Activated naive CD4-positive, alpha-beta T cell treated with anti-CD3 and anti-CD28 coated beads for 36 hours (primary cell): ENCODE measurements at regions of chr10 and their contacts with region 1.

Region 1: DNA sequence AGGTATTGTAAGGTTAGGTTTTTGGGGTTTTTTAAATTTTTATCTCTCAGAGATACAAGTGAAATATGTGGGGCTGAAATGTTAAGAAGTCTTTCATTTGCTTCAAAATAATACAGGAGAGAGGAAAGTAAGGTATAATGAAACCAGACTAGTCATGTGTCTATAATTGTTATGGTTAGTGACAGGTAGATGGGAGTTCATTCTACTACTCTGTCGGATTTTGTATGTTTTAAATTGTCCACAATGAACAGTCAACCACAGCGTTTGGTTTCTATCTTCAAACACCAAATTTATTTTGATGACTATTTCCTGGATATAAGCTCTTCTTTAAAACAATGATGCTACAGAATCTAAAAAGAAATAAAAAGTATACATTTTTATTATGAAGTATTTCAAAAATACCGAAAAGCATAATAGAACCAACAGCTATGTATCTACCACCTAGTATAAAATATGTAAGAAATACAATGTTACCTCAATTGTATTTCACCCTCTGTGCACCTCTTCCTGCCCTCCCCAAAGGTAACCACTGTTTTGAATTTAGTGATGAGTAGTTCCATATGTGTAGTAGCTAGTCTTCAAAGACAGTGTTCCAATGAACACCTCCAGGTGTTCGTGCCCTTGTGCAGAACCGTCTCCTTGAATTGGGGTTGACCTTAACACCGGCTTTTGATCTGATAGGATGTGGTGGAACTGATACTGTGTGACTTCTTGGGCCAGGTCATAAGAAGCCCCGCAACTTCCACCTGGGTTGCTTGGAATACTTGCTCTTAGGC is 74.8 kb upstream of the CDK1 start:
- DNase-seq: no peak
- H3K4me3 Mint-ChIP-seq: no peak overlapping the region
- H3K27ac Mint-ChIP-seq: peak overlapping the region; percentile 2
- H3K4me1 Mint-ChIP-seq: peaks cover 45% of the 10 kb centered on the region
- H3K27me3 Mint-ChIP-seq: no peaks in the 10 kb centered on the region

Region 2: DNA sequence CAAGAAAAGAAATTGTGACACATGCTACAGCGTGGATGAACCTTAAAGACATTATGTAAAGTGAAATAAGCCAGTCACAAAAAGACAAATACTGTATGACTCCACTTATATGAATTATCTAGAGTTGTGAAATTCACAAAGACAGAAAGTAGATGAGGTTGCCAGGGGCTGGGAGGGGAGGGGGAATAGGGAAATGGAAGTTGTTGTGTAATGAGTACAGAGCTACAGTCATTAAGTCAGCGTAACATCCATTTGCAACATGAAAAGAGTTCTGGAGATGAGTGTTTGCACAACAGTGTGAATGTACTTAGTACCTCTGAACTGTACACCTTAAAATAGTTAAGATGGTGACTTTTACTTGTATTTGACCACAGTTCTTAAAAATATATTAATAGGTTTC is 37.2 kb before region 1 on chr10:
- CTCF ChIA-PET with region 1: no interaction called
- intact Hi-C with region 1: loop called (anchors 2 kb)
- DNase-seq: peak; percentile 51
- H3K4me3 Mint-ChIP-seq: no peak overlapping the region
- H3K27ac Mint-ChIP-seq: no peak overlapping the region
- H3K4me1 Mint-ChIP-seq: peaks cover 20% of the 10 kb centered on the region
- H3K27me3 Mint-ChIP-seq: no peaks in the 10 kb centered on the region